Heart right ventricle (tissue), 16 donors: ENCODE measurements at regions of chr20 and their contacts with region 1.

Region 1: GRCh38 chr20:49338061-49338460 is 60.2 kb upstream of the ZNFX1 start:
- DNase-seq: no peak
- ATAC-seq: no peak
- H3K4me3 ChIP-seq: no peak overlapping the region
- H3K27ac ChIP-seq: no peak overlapping the region
- H3K4me1 ChIP-seq: no peaks in the 10 kb centered on the region
- H3K27me3 ChIP-seq: peaks cover 0 to 12% (median 8%) of the 10 kb centered on the region in 7 donors
- CTCF ChIP-seq: no peak

Region 2: GRCh38 chr20:49171909-49172308 is 166.2 kb before region 1 on chr20:
- intact Hi-C with region 1: no loop called
- DNase-seq: peak in 1 of 2 donors; percentile 11
- ATAC-seq: no peak
- H3K4me3 ChIP-seq: no peak overlapping the region
- H3K27ac ChIP-seq: no peak overlapping the region
- H3K4me1 ChIP-seq: peaks cover 0 to 32% (median 23%) of the 10 kb centered on the region in 9 donors
- H3K27me3 ChIP-seq: no peaks in the 10 kb centered on the region
- CTCF ChIP-seq: no peak

Region 3: GRCh38 chr20:49384437-49385088 is 46.5 kb after region 1 on chr20:
- intact Hi-C with region 1: loop called in 3 of 10 experiments (anchors 5 kb)
- DNase-seq: peak; percentile 75 to 81
- ATAC-seq: peak in 6 of 8 donors; percentile 29 to 76 (median 49)
- H3K4me3 ChIP-seq: no peak overlapping the region
- H3K27ac ChIP-seq: no peak overlapping the region
- H3K4me1 ChIP-seq: peaks cover 0 to 46% (median 16%) of the 10 kb centered on the region in 9 donors
- H3K27me3 ChIP-seq: no peaks in the 10 kb centered on the region
- CTCF ChIP-seq: peak; percentile 58 to 81 (median 72)

Region 4: GRCh38 chr20:49484180-49485140 is 146.4 kb after region 1 on chr20:
- intact Hi-C with region 1: loop called (anchors 1 to 5 kb)
- DNase-seq: peak; percentile 71 to 82
- ATAC-seq: peak; percentile 88 to 94 (median 92)
- H3K4me3 ChIP-seq: peak overlapping the region in 9 of 10 donors; percentile 42 to 62 (median 54)
- H3K27ac ChIP-seq: no peak overlapping the region
- H3K4me1 ChIP-seq: peaks cover 3 to 25% (median 14%) of the 10 kb centered on the region in 9 donors
- H3K27me3 ChIP-seq: peaks cover 0 to 76% (median 26%) of the 10 kb centered on the region in 7 donors
- CTCF ChIP-seq: peak; percentile 62 to 94 (median 80)

Region 5: DNA sequence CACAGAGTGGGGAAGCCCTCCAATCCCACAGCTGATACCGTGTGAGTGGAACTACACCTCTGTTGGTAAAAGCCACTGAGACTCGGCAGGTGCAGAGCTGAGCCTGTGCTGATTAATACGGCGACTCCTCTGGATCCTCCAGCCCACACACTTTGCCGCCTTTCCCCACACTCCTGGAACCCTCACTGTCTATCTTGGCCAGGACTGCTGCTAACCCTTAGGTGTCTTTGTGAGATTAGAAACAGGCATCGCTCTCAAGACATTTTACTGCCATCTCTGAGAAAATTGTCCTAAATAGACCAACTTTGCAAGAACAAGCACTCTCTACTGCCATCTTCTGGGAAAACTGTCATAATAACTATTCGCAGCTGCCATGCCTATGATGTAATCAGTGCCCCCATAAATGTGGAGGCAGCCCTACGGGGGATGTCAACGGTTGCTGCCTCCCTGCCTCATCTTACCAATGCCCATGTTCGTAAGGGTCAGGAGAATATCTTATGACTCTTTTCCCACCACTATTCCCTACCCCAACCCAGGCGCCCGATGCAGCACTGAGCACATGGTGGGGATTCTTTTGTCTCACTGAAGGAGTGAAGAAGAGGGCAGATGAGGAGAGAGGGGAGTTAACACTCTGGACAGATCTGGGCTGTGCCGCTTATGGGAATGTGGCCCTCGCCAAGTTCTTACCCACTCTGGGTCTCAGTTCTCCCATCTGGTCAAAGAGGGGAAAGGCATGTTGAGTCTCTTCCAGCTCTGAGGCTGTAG is 170.6 kb after region 1 on chr20:
- intact Hi-C with region 1: loop called in 6 of 10 experiments (anchors 1 to 5 kb)
- DNase-seq: no peak
- ATAC-seq: peak in 3 of 8 donors; percentile 2 to 34 (median 20)
- H3K4me3 ChIP-seq: no peak overlapping the region
- H3K27ac ChIP-seq: no peak overlapping the region
- H3K4me1 ChIP-seq: peaks cover 0 to 25% (median 8%) of the 10 kb centered on the region in 9 donors
- H3K27me3 ChIP-seq: peaks cover 0 to 15% (median 7%) of the 10 kb centered on the region in 7 donors
- CTCF ChIP-seq: peak in 8 of 9 donors; percentile 37 to 69 (median 59)

Region 6: GRCh38 chr20:49534255-49534712 is 196.2 kb after region 1 on chr20:
- intact Hi-C with region 1: loop called (anchors 1 to 5 kb)
- DNase-seq: peak in 1 of 2 donors; percentile 57
- ATAC-seq: peak in 7 of 8 donors; percentile 65 to 79 (median 70)
- H3K4me3 ChIP-seq: no peak overlapping the region
- H3K27ac ChIP-seq: no peak overlapping the region
- H3K4me1 ChIP-seq: peaks cover 0 to 8% (median 0%) of the 10 kb centered on the region in 9 donors
- H3K27me3 ChIP-seq: no peaks in the 10 kb centered on the region
- CTCF ChIP-seq: peak; percentile 54 to 90 (median 83)

Region 7: DNA sequence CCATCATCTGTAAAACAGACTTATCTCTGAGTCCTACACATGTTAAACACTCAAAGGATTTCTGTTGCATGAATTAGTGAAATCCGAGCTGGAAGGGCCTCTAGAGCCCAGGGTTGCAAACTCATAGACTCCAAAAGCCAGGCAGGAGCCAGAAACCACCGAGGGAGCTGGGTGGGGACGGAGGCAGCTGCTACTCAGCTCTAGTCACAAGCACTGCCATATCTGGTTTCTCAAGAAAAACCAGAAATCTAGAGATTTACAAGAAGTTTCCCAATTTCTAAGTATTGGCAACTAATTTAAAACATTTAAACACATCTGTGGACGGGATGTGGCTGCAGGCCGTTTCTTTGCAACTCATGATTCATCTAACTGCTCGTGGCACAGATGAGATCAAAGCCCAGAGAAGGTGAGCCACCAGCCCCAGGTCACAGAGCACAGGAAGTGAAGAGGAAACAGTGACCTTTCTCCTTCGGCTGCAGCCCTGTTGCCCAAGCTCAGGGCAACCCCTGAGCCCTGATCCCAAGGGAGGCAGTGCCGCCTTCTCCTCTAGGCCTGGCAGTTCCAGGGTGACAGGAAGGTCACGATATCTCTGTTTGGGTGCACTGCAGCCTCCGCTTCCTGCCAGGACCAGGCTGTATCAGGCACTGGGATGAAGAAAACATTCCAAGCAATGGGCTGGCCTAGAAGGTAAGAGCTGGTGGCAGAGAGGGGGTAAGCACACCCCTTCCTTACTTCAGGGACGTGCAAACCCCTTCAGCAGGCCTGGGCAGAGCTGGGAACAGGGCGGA is 256.3 kb after region 1 on chr20:
- intact Hi-C with region 1: loop called in 1 of 10 experiments (anchors 10 kb)
- DNase-seq: peak; percentile 48 to 67
- ATAC-seq: peak; percentile 58 to 84 (median 73)
- H3K4me3 ChIP-seq: peak overlapping the region in 1 of 10 donors; percentile 22
- H3K27ac ChIP-seq: peak overlapping the region; percentile 16 to 81 (median 71)
- H3K4me1 ChIP-seq: peaks cover 5 to 61% (median 30%) of the 10 kb centered on the region in 9 donors
- H3K27me3 ChIP-seq: no peaks in the 10 kb centered on the region
- CTCF ChIP-seq: no peak